Heart left ventricle (tissue), 16 donors: ENCODE measurements at regions of chr14 and their contacts with region 1.

Region 1: GRCh38 chr14:34875031-34875922 is at the start of gene BAZ1A:
- DNase-seq: peak; percentile 64 to 81 (median 68)
- ATAC-seq: peak; percentile 45 to 71 (median 69)
- H3K4me3 ChIP-seq: peak within 1 kb of the TSS; percentile 66 to 97 (median 86)
- H3K27ac ChIP-seq: peak within 1 kb of the TSS; percentile 93 to 100 (median 98)
- H3K4me1 ChIP-seq: peaks cover 0 to 26% (median 6%) of the 10 kb centered on the region in 12 donors
- H3K27me3 ChIP-seq: no peaks in the 10 kb centered on the region
- CTCF ChIP-seq: peak in 9 of 12 donors; percentile 7 to 45 (median 19)
- POLR2A ChIP-seq: peak in 1 of 2 donors; percentile 94
- total RNA-seq, gene BAZ1A: 3.8 to 20.3 (median 6.5) TPM

Region 2: GRCh38 chr14:34682787-34683321 is 192.4 kb before region 1 on chr14:
- intact Hi-C with region 1: loop called in 1 of 10 experiments (anchors 10 kb)
- DNase-seq: peak in 1 of 5 donors; percentile 30
- ATAC-seq: peak; percentile 73 to 94 (median 87)
- H3K4me3 ChIP-seq: peak overlapping the region in 2 of 12 donors; percentile 13 to 15
- H3K27ac ChIP-seq: peak overlapping the region in 6 of 12 donors; percentile 12 to 79 (median 58)
- H3K4me1 ChIP-seq: peaks cover 0 to 7% (median 0%) of the 10 kb centered on the region in 12 donors
- H3K27me3 ChIP-seq: peaks cover 0 to 5% (median 0%) of the 10 kb centered on the region in 9 donors
- CTCF ChIP-seq: no peak
- POLR2A ChIP-seq: no peak

Region 3: DNA sequence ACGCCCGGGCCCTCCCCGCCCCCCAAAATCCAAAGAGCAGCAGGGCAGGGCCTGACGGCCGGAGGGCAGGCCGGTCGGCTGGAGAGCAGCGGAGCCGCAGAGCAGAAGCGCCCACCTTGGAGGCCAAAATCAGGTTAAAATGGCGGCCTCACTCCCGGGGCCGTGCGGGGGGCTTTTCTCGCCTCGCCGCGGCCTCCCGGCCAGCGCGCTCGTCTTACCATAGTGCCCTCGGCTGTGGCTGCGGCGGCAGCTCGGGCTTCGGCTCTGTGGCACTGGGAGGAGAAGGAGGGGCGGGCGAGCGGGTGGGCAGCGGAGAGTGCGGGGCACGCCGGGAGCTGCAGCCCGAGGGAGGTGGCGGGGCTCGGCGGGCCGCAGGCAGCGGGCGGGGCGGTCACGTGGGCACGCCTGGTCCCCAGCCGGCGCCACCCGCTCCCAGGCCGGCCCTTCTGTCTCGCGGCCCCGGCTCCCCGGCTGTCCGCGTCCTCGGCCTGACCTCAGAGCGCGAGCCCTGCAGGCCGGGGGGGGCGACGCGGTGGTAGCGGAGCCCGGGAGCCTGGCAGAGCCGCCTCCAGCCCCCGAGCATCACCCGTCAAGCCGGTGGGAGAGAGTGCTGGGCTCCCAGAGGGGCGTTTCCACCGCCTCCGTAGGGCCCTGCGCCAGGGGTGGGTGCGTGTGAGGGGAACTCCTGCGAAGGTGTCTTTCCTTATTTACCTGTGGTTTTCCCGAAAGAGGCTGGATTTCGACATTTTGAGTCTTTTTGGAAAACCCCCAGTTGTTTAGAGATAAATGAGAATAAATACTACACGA is 160.8 kb before region 1 on chr14 and contains the start of gene CFL2:
- intact Hi-C with region 1: loop called in 1 of 10 experiments (anchors 10 kb)
- DNase-seq: peak; percentile 89 to 93 (median 92)
- ATAC-seq: peak; percentile 73 to 98 (median 91)
- H3K4me3 ChIP-seq: peak within 1 kb of the TSS; percentile 67 to 95 (median 88)
- H3K27ac ChIP-seq: peak within 1 kb of the TSS; percentile 93 to 100 (median 98)
- H3K4me1 ChIP-seq: peaks cover 0 to 49% (median 23%) of the 10 kb centered on the region in 12 donors
- H3K27me3 ChIP-seq: no peaks in the 10 kb centered on the region
- CTCF ChIP-seq: no peak
- POLR2A ChIP-seq: peak; percentile 48 to 81
- total RNA-seq, gene CFL2: 381 to 1,097 (median 604) TPM

Region 4: DNA sequence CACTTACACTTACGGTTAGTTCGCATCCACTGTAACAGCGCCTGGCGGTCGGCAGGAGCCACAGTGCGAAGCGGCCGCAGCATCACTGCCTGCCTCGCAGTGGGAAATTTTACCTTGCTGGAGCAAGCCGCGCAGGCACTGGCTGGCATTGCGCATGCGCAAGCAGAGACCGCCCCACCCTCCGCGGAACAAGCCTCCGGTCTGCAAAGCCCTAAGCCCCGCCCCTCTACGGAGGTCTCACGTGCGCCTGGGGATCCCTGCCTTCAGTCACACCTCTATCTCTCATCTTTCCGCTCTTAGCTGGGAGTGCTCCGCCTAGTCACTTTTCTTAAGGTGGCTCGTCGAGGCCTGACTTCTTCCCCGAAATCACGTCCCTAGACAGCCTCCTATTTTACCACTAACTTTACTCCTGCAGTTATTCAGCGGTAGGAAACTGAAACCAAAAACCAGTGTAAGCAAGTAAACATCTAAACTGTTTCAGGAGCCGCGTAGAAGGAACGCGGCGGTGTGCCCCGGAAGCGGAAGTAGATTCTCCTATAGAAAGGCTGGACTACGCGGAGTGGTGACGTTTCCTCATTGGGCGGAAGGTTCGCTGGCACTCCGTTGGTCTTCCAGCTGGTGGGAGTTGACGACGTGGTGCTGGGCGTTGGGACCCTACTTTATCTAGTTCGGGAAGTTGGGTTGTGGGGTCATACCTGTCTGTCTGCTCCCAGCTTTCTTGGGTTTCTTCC is 107.3 kb after region 1 on chr14 and contains the start of gene SRP54:
- intact Hi-C with region 1: loop called (anchors 1 to 10 kb)
- DNase-seq: peak; percentile 98 to 99 (median 99)
- ATAC-seq: peak; percentile 97 to 99 (median 97)
- H3K4me3 ChIP-seq: peak within 1 kb of the TSS; percentile 66 to 99 (median 86)
- H3K27ac ChIP-seq: peak within 1 kb of the TSS; percentile 90 to 100 (median 96)
- H3K4me1 ChIP-seq: peaks cover 7 to 44% (median 29%) of the 10 kb centered on the region in 12 donors
- H3K27me3 ChIP-seq: no peaks in the 10 kb centered on the region
- CTCF ChIP-seq: peak in 4 of 12 donors; percentile 3 to 21 (median 9)
- POLR2A ChIP-seq: peak in 1 of 2 donors; percentile 83
- total RNA-seq, gene SRP54: 29.0 to 37.3 (median 34.0) TPM

Region 5: DNA sequence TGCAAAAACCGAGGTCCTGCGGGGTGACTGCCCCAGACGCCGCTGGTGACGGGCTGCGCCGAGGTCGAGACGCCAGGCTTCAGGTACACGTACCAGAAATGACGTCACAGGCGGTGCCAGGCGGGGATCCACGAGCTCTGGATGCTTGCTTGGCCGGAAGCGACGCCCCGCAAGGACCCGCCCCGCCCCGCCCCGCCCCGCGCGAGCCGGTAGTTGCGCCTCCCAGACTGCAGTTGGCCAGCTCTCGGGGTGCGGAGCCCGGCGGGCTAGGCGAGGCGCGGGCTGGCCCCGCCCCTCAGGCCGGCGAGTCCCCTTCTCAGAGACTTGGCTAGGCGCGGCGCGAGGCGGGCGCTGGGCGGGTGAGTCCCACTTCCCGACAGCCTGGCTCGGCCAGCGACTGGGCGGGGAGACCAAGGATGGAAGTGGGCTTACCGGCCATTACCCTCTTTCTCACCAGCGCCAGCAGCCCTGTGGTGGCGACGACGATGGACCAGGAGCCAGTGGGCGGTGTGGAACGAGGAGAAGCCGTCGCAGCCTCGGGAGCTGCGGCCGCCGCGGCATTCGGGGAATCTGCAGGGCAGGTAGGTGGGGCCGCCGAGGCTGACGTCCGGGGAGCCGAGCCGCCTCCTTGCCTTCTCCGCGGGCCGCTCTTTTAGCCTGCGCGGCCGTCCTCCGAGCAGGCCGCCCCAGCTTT is 170.9 kb after region 1 on chr14 and contains the start of gene FAM177A1:
- intact Hi-C with region 1: loop called in 1 of 10 experiments (anchors 5 kb)
- DNase-seq: peak; percentile 97 to 99 (median 99)
- ATAC-seq: peak; percentile 96 to 98 (median 98)
- H3K4me3 ChIP-seq: peak within 1 kb of the TSS; percentile 62 to 95 (median 84)
- H3K27ac ChIP-seq: peak within 1 kb of the TSS; percentile 91 to 99 (median 96)
- H3K4me1 ChIP-seq: peaks cover 0 to 43% (median 27%) of the 10 kb centered on the region in 12 donors
- H3K27me3 ChIP-seq: no peaks in the 10 kb centered on the region
- CTCF ChIP-seq: no peak
- POLR2A ChIP-seq: peak; percentile 74 to 96
- total RNA-seq, gene FAM177A1: 56.3 to 129 (median 98.8) TPM

Region 6: DNA sequence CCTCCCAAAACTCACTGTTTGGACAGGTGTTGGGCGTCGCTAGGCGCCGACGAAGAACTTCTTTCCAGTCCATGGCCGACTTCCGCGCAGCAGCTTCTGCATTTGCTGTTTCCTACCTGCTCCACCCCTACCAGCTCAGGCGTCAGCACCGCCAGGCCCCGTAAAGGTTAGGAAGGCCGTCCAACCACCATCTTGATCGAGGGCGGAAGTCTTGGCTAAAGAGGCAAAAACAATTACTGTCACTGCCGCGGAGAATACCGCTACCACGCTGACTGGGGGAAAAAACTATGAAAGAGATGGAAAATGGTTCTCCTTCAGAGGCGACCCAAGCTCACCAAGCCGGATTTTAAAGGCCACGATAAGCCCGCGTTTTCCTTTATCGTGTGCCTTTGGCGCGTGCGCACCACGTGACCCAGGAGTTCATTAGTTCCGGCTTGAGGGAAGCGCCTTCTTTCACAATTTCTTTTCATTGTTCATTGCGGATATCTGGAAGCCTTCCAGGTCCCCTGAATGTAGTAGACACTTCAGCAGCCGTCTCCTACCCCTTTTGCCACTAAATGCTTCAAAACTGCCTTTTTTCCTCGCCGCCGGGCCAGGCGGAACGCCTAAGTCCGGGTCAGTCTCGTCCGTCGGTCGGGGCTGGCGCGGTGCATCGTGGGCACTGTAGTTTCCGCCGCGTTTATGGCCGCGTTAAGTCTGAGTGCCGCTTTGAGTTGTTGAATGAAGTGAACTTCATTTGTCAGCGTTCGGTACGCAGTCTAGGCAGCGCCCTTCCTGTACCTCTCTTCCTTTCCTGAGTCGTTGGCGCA is 246.8 kb after region 1 on chr14 and contains the starts of genes PPP2R3C and PRORP:
- intact Hi-C with region 1: loop called in 3 of 10 experiments (anchors 2 to 10 kb)
- DNase-seq: peak; percentile 91 to 94 (median 92)
- ATAC-seq: peak; percentile 95 to 97 (median 96)
- H3K4me3 ChIP-seq: peak within 1 kb of the TSS; percentile 55 to 86 (median 68)
- H3K27ac ChIP-seq: peak within 1 kb of the TSS; percentile 91 to 100 (median 96)
- H3K4me1 ChIP-seq: peaks cover 0 to 53% (median 18%) of the 10 kb centered on the region in 12 donors
- H3K27me3 ChIP-seq: no peaks in the 10 kb centered on the region
- CTCF ChIP-seq: no peak
- POLR2A ChIP-seq: peak in 1 of 2 donors; percentile 60
- total RNA-seq, gene PPP2R3C: 15.2 to 37.3 (median 28.5) TPM
- total RNA-seq, gene PRORP: 18.0 to 25.8 (median 21.1) TPM

Region 7: GRCh38 chr14:35826218-35826951 is 951.1 kb after region 1 on chr14 and contains the start of gene BRMS1L:
- intact Hi-C with region 1: loop called in 1 of 10 experiments (anchors 10 kb)
- DNase-seq: peak; percentile 98 to 99 (median 99)
- ATAC-seq: peak; percentile 98
- H3K4me3 ChIP-seq: peak within 1 kb of the TSS; percentile 68 to 97 (median 81)
- H3K27ac ChIP-seq: peak within 1 kb of the TSS; percentile 94 to 100 (median 97)
- H3K4me1 ChIP-seq: peaks cover 0 to 14% (median 8%) of the 10 kb centered on the region in 12 donors
- H3K27me3 ChIP-seq: no peaks in the 10 kb centered on the region
- CTCF ChIP-seq: peak in 6 of 12 donors; percentile 4 to 43 (median 27)
- POLR2A ChIP-seq: peak; percentile 62 to 95
- total RNA-seq, gene BRMS1L: 5.3 to 14.8 (median 11.2) TPM